Head of caudate nucleus (tissue), 42 donors: ENCODE measurements at regions of chr9 and their contacts with region 1.

Region 1: GRCh38 chr9:2281031-2281802 is 266.1 kb downstream of the SMARCA2 start:
- DNase-seq: no peak

Region 2: DNA sequence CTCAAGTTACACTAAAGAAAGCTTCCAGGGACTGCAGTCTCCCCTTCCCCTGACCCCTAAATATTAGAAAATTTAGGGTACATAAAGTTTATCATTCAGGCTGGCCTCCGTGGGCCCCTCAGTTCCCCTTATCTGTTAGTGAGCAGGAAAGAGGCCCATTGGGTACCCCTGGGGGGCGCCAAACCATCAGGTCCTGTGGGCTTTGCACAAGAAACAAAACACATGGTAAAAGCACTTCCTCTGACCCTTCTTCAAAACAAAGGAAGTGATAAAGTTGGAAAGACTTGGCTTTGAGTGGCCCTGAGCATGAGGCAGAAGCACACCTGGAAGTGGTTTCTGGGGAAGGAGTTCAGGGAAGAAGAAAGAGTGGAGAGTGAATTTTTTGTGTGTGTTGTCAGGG is 53.1 kb before region 1 on chr9:
- intact Hi-C with region 1: loop called (anchors 10 kb)
- DNase-seq: peak; percentile 13 to 82 (median 52)

Region 3: GRCh38 chr9:2697492-2697891 is 416.3 kb after region 1 on chr9:
- intact Hi-C with region 1: no loop called
- DNase-seq: no peak

Region 4: GRCh38 chr9:2966565-2967300 is 685.5 kb after region 1 on chr9:
- intact Hi-C with region 1: no loop called
- DNase-seq: peak in 1 of 42 donors; percentile 3